ENCODE measurements at regions of chr15 and their contacts with region 1.

Region 1: GRCh38 chr15:32659340-32660155 is 18.0 kb downstream of the SCG5 start:
- DNase-seq: no peak
- H3K4me3 ChIP-seq: no peak overlapping the region
- H3K27ac ChIP-seq: no peak overlapping the region
- H3K4me1 ChIP-seq: no peaks in the 10 kb centered on the region
- H3K27me3 ChIP-seq: no peaks in the 10 kb centered on the region
- CTCF ChIP-seq: no peak
- POLR2A ChIP-seq: no peak

Region 2: GRCh38 chr15:32790352-32790999 is 130.9 kb after region 1 on chr15:
- intact Hi-C with region 1: no loop called
- DNase-seq: no peak
- H3K4me3 ChIP-seq: no peak overlapping the region
- H3K27ac ChIP-seq: no peak overlapping the region
- H3K4me1 ChIP-seq: no peaks in the 10 kb centered on the region
- H3K27me3 ChIP-seq: no peaks in the 10 kb centered on the region
- CTCF ChIP-seq: no peak
- POLR2A ChIP-seq: no peak

Region 3: DNA sequence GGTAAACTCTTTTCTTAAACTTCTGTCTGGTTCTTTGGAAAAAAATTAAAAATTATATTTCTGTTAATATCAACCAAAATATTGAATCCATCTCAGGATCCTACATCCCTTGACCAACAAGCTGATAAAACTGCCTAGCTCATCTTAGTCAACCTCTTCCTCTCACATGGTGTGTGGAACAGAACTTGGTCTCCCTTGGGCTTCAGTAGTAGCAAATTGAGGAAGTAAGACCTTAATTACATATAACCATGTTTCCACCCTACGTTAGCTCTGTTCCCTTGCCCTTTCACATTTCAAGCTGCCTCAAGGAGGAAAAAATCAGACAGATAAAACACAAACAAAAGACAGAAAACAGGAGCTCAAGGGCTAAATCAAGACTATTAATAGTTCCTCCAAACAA is 174.6 kb after region 1 on chr15:
- intact Hi-C with region 1: no loop called
- DNase-seq: no peak
- H3K4me3 ChIP-seq: no peak overlapping the region
- H3K27ac ChIP-seq: no peak overlapping the region
- H3K4me1 ChIP-seq: no peaks in the 10 kb centered on the region
- H3K27me3 ChIP-seq: no peaks in the 10 kb centered on the region
- CTCF ChIP-seq: no peak
- POLR2A ChIP-seq: no peak

Region 4: GRCh38 chr15:32994810-32995424 is 335.4 kb after region 1 on chr15:
- intact Hi-C with region 1: loop called (anchors 10 kb)
- DNase-seq: no peak
- H3K4me3 ChIP-seq: no peak overlapping the region
- H3K27ac ChIP-seq: no peak overlapping the region
- H3K4me1 ChIP-seq: peaks cover 0 to 4% of the 10 kb centered on the region in 2 donors
- H3K27me3 ChIP-seq: no peaks in the 10 kb centered on the region
- CTCF ChIP-seq: peak; percentile 40 to 50 (median 46)
- POLR2A ChIP-seq: no peak

Region 5: GRCh38 chr15:33111041-33111451 is 451.5 kb after region 1 on chr15:
- intact Hi-C with region 1: no loop called
- DNase-seq: no peak
- H3K4me3 ChIP-seq: no peak overlapping the region
- H3K27ac ChIP-seq: no peak overlapping the region
- H3K4me1 ChIP-seq: no peaks in the 10 kb centered on the region
- H3K27me3 ChIP-seq: no peaks in the 10 kb centered on the region
- CTCF ChIP-seq: no peak
- POLR2A ChIP-seq: no peak